H1 (cell line): ENCODE measurements at regions of chr10 and their contacts with region 1.

Region 1: DNA sequence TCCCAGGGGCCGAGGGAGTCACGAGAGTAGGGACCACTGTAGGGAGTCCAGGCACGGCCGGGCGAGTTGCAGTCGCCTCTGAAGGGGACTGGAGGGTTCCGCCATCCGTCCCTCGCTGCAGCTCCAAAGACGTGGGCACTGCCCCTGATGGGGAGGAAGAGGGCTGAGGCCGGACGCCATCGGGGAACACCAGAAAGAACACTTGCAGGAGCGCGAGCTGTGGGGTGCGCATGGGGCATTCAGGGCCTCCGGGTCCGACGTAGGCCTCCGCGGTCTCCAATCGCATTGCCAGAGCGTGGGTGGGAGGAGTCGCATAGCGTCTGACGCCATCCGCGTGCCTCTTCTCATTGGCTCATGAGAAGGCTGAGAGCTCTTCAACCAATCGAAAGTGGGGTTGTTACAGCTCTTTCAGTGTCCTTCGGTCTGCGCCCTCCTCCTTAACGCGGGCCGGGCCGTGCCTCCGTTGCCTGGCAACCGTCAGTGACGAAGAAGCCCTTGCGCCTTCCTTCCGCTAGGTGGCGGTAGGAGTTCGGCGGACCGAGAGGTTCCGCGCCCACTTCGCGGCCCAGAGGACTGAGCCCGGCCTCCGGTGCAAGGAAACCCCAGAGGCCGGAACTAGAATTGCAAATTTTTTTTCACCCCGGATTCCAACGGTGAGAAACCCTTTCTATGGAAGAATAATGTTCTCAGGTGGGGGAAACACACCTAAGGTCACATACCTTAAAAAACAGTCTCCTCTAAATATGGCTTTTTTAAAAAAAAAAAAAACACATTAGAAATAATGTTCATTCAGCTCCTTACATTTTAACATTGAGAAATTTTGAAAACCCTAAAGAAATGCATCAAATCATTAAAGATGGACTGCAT is at the start of gene TCTN3:
- DNase-seq: peak; percentile 95 to 97
- H3K4me3 ChIP-seq: peak within 1 kb of the TSS; percentile 65 to 98 (median 82)
- H3K27ac ChIP-seq: peak within 1 kb of the TSS; percentile 82
- H3K4me1 ChIP-seq: peaks cover 0 to 3% (median 1%) of the 10 kb centered on the region in 4 experiments; a peak in 2 of 7 replicates
- H3K27me3 ChIP-seq: no peaks in the 10 kb centered on the region
- CTCF ChIP-seq: peak; percentile 99 to 100 (median 99)
- EP300 ChIP-seq: peak in 1 of 2 experiments; percentile 79; a peak in 1 of 3 replicates
- POLR2A ChIP-seq: peak; percentile 64 to 90
- RAD21 ChIP-seq: peak; percentile 97 to 99
- total RNA-seq, gene TCTN3: 31.9 and 34.7 TPM in 2 replicates

Region 2: GRCh38 chr10:95706986-95707385 is 13.1 kb after region 1 on chr10:
- CTCF ChIA-PET with region 1: interaction called, 19 read pairs
- POLR2A ChIA-PET with region 1: no interaction called
- DNase-seq: no peak
- H3K4me3 ChIP-seq: no peak overlapping the region
- H3K27ac ChIP-seq: no peak overlapping the region
- H3K4me1 ChIP-seq: no peaks in the 10 kb centered on the region
- H3K27me3 ChIP-seq: no peaks in the 10 kb centered on the region
- CTCF ChIP-seq: no peak
- EP300 ChIP-seq: no peak
- POLR2A ChIP-seq: no peak
- RAD21 ChIP-seq: no peak

Region 3: DNA sequence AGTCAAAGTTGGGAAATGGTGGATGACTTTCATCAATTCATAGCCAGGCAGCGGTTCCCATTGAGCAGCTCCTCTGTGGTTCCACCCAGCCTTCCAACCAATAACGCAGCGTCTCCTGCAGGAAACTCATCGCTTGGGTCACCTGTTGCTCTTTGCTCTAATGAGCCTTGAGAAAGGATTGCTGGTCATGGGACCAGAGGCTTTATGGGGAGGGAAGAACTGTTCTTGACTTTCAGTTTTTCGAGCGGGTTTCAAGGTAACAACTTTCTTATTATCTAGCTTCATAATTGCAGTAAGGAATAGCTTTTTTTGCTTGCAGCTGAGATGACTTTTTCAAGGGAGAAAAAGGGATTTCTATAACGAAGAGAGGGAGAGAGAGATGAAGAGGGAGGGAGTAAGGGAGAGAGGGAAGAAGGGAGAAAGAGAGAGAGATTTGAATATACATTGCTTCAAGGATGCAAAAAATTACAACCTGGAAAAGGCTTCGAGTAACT is 61.7 kb after region 1 on chr10:
- CTCF ChIA-PET with region 1: interaction called, 16 read pairs
- POLR2A ChIA-PET with region 1: no interaction called
- DNase-seq: no peak
- H3K4me3 ChIP-seq: peak overlapping the region; percentile 37 to 63 (median 53)
- H3K27ac ChIP-seq: no peak overlapping the region
- H3K4me1 ChIP-seq: peaks cover 0 to 3% (median 1%) of the 10 kb centered on the region in 4 experiments; a peak in 4 of 7 replicates
- H3K27me3 ChIP-seq: no peaks in the 10 kb centered on the region; a peak in 1 of 7 replicates
- CTCF ChIP-seq: no peak
- EP300 ChIP-seq: no peak
- POLR2A ChIP-seq: no peak
- RAD21 ChIP-seq: no peak

Region 4: DNA sequence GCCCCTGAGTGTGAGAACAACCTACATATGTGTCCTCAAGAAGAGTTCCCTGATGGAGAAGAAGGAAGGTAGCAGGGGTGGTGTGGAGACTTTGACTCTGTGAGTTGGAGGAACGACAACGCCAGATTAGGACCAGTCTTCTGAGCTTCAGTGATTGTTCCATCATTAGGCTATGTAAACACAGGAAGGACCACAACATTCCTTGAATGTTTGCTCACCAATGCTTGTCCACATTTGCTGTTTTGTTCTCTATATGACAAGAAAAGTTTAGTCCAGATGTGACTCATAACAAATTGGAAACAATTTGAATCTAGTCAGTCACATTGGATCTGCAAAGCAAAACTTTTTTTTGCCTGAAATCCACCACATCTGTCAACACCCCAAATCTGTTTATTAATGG is 124.8 kb after region 1 on chr10:
- CTCF ChIA-PET with region 1: interaction called, 10 read pairs
- POLR2A ChIA-PET with region 1: no interaction called
- DNase-seq: no peak
- H3K4me3 ChIP-seq: no peak overlapping the region
- H3K27ac ChIP-seq: no peak overlapping the region
- H3K4me1 ChIP-seq: no peaks in the 10 kb centered on the region
- H3K27me3 ChIP-seq: no peaks in the 10 kb centered on the region
- CTCF ChIP-seq: no peak
- EP300 ChIP-seq: no peak
- POLR2A ChIP-seq: no peak
- RAD21 ChIP-seq: no peak

Region 5: DNA sequence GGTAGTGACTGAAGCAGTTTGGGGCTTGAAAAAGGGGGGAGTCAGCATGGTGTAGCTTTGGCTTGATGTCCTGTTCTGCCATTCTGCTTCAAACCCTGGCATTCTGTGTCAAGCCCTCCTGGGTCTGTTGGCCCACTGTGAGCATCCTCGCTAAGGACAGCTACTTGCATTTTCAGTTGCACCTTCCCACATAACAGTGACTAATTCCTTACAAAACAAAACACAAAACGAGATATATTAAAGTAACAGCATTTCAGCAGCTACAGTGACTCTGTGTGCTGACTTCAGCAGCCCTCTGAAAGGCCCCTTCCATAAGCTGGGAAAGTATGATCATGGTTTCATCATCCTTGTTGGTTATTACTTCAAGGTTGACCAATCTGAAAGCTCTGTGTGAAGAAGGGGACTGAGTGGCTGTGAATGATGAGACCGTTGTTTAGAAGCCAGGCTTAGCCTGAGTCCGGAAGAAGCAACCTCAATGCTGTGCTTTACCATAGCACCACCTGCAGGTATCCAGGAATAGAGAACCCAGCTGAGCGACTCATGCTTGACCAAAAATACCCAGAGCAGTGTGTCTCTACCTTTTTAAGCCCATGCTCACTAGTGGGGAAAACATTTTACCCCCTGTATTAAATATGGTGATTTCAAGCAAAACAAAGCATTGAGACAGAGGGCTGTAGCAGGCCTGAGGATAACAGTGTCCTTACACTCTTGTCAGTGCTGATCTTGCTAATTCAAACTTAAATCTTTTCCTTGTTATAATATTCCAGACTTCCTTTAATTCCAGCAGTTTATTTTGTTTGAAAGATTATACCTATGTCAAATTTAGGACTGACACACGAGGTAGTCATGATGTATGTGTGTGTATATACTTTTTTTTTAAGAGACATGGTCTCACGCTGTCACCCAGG is 171.3 kb after region 1 on chr10:
- CTCF ChIA-PET with region 1: interaction called, 63 read pairs
- POLR2A ChIA-PET with region 1: interaction called, 4 read pairs
- DNase-seq: no peak
- H3K4me3 ChIP-seq: no peak overlapping the region
- H3K27ac ChIP-seq: no peak overlapping the region
- H3K4me1 ChIP-seq: no peaks in the 10 kb centered on the region
- H3K27me3 ChIP-seq: no peaks in the 10 kb centered on the region
- CTCF ChIP-seq: peak; percentile 47 to 87 (median 75)
- EP300 ChIP-seq: no peak
- POLR2A ChIP-seq: no peak
- RAD21 ChIP-seq: peak; percentile 90 to 91

Region 6: DNA sequence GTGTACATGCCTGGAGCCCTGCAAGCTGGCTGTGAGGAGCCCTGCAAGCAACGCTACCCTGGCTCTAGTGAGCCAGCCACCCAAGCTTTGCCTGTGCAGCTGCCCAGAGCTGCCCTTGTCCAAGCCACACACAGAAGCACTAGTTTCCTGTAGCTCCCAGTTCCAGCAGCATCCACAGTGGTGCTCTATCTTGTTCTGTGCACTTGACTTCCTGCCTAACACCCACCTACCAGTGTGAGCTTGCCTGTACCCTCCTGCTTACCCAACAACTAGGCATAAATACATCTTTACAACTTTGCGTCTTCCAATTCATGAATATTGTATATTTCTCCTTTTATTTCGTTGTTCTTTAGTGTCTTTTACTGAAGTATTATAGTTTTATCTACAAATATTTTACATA is 404.0 kb after region 1 on chr10:
- CTCF ChIA-PET with region 1: no interaction called
- POLR2A ChIA-PET with region 1: no interaction called
- DNase-seq: no peak
- H3K4me3 ChIP-seq: no peak overlapping the region
- H3K27ac ChIP-seq: no peak overlapping the region
- H3K4me1 ChIP-seq: no peaks in the 10 kb centered on the region
- H3K27me3 ChIP-seq: no peaks in the 10 kb centered on the region
- CTCF ChIP-seq: no peak
- EP300 ChIP-seq: no peak
- POLR2A ChIP-seq: no peak
- RAD21 ChIP-seq: no peak